A549 (cell line): ENCODE measurements at regions of chr3 and their contacts with region 1.

Region 1: GRCh38 chr3:100463002-100463401 is 29.4 kb upstream of the TMEM45A start:
- DNase-seq: peak; percentile 53 to 67
- ATAC-seq: peak; percentile 98
- H3K4me3 ChIP-seq: no peak overlapping the region
- H3K27ac ChIP-seq: no peak overlapping the region
- H3K4me1 ChIP-seq: no peaks in the 10 kb centered on the region
- CTCF ChIP-seq: peak; percentile 92
- EP300 ChIP-seq: no peak
- POLR2A ChIP-seq: no peak
- RAD21 ChIP-seq: peak; percentile 94 to 96

Region 2: GRCh38 chr3:100416176-100416575 is 46.8 kb before region 1 on chr3:
- CTCF ChIA-PET with region 1: interaction called, 12 read pairs
- POLR2A ChIA-PET with region 1: no interaction called
- DNase-seq: no peak
- ATAC-seq: no peak
- H3K4me3 ChIP-seq: no peak overlapping the region
- H3K27ac ChIP-seq: no peak overlapping the region
- H3K4me1 ChIP-seq: no peaks in the 10 kb centered on the region
- CTCF ChIP-seq: no peak
- EP300 ChIP-seq: no peak
- POLR2A ChIP-seq: no peak
- RAD21 ChIP-seq: no peak

Region 3: DNA sequence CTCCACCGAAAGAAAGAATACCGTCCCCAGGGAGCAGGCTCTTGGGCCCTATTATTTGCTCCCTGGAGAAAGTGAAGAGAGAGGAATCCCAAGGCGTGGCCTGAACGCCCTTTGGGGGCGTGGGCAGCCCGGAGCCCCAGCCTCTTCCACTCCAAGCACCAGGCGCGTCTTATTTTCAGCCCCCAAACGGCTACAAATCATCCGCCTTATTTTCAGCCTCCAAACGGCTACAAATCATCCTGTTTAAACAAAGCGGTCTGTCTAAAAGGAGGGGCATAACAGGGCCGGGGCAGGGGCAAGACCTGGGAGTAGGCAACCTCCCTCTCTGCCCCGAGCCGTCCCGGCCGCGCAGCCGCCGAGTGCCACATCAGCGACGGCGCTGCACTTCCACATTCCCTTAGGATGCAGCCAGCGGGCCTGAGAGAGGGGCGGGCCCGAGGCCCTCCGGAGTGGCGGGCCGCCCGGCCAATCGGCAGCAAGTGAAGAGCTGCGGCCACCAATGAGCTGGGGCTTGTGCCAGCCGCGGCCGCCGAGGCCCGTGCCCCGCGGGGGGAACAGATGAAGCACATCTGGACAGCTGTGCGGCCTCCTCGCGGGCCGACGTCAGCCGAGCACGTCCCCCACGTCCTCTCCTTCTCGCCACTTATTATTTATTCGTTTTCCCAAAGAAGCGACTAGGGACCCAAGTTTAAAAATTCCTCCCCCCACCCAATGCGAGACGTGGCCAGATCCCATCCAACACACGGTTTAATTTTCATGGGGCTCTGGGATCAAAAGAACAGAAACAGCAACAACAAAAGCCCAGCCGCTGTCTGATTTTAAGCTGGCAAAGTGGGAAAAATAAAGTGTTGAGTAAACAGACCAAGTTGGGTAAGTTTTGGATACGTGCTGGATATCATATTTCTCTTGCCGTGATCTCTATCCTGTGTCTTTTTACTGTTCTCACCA is 29.3 kb after region 1 on chr3 and contains the start of gene TMEM45A:
- CTCF ChIA-PET with region 1: interaction called, 13 read pairs
- POLR2A ChIA-PET with region 1: interaction called, 4 read pairs
- DNase-seq: peak; percentile 95
- ATAC-seq: peak; percentile 99
- H3K4me3 ChIP-seq: peak within 1 kb of the TSS; percentile 56
- H3K27ac ChIP-seq: peak within 1 kb of the TSS; percentile 75 to 82
- H3K4me1 ChIP-seq: peaks cover 11% of the 10 kb centered on the region
- CTCF ChIP-seq: no peak
- EP300 ChIP-seq: no peak
- POLR2A ChIP-seq: peak; percentile 74
- RAD21 ChIP-seq: peak in 1 of 2 experiments; percentile 29; a peak in 1 of 5 replicates
- polyA plus RNA-seq, gene TMEM45A: 7.0 and 8.1 TPM in 2 replicates

Region 4: GRCh38 chr3:100590114-100590839 is 127.3 kb after region 1 on chr3:
- CTCF ChIA-PET with region 1: interaction called, 130 read pairs
- POLR2A ChIA-PET with region 1: no interaction called
- DNase-seq: peak; percentile 49 to 73
- ATAC-seq: peak; percentile 86 to 92
- H3K4me3 ChIP-seq: peak overlapping the region; percentile 23; the same call in 1 of the 3 replicates
- H3K27ac ChIP-seq: peak overlapping the region in 1 of 2 experiments; percentile 53; a peak in 1 of 6 replicates
- H3K4me1 ChIP-seq: peaks cover 13% of the 10 kb centered on the region
- CTCF ChIP-seq: peak; percentile 93
- EP300 ChIP-seq: no peak
- POLR2A ChIP-seq: no peak
- RAD21 ChIP-seq: peak; percentile 84 to 85

Region 5: DNA sequence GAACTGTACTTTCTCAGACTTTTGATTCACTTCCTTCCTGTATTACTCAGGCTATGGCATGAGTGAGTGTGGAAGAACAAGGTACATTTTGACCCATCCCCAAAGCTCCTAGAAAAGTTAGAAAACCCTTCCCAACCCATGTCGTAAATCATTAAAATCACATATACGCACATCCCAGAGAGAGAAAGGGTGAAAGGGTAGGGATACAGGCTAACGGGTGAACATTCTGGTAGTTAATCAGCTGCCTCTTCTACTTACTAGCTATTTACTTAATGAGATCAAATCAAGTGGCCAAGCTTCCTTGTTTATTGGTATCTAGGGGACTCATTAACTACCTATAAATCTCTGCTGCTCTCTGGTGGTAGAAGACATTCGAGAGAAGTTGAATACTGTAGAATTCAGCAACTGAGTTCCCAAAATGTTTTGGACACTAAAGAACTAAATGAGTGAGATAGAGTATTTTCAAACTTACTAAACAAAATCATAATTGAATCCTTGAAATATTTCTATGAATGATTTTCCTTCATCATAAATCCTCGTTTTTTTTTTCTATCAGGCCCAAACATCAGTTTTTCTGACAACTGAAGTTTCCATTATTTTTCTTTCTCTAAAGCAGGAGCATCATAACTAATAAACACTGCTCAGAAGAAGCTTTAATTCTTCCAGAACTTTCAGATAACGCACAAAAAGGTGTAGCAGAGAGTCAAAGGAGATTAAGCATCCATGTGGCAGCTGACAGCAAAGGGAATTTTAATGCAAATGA is 733.1 kb after region 1 on chr3:
- CTCF ChIA-PET with region 1: interaction called, 20 read pairs
- POLR2A ChIA-PET with region 1: no interaction called
- DNase-seq: peak; percentile 28 to 66
- ATAC-seq: peak; percentile 74 to 84
- H3K4me3 ChIP-seq: no peak overlapping the region
- H3K27ac ChIP-seq: peak overlapping the region; percentile 42 to 79; a peak in 5 of 6 replicates
- H3K4me1 ChIP-seq: 0 out of 3 replicates have a peak, but pooled peaks cover 6% of the 10 kb centered on the region
- CTCF ChIP-seq: peak; percentile 81
- EP300 ChIP-seq: no peak
- POLR2A ChIP-seq: no peak
- RAD21 ChIP-seq: peak; percentile 92 to 94